ENCODE measurements at regions of chrX and their contacts with region 1.

Region 1: DNA sequence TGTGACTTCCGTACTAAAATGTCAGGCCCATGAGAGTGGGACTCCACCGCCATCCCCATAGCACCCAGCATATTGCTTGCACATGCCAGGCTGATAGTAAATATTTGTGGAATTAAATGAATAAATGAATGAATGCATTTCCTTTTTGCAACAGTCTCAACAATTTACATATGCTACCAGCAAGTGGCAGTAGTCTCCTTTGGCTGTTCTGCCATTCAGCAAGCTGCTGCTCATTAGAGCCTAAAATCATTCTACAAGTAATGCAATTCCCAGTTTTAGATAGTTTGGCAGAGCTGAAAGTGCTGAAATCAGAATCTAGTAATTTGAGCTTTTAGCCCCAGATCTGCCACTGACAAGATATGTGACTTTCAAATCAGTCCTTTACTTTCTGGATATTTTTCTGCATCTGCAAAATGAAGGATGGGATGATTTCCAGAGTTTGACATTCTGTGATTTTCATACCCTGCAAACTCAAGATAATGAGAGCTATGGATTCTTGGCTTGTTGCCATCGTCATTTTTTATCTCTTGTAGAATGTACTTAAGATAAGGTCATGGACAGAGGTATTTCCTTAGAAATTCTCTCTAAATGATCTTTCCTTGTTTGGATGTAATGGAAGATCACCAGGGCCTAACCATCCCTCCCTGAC is 35.7 kb upstream of the INTS6L start:
- DNase-seq: peak in 7 of 9 donors; percentile 12 to 59 (median 36)
- ATAC-seq: peak; percentile 60
- H3K4me3 ChIP-seq: no peak overlapping the region
- H3K4me3 Mint-ChIP-seq: no peak overlapping the region
- H3K27ac ChIP-seq: no peak overlapping the region
- H3K27ac Mint-ChIP-seq: peak overlapping the region in 1 of 9 donors; percentile 24
- H3K4me1 ChIP-seq: no peaks in the 10 kb centered on the region
- H3K4me1 Mint-ChIP-seq: no peaks in the 10 kb centered on the region
- H3K27me3 ChIP-seq: no peaks in the 10 kb centered on the region
- H3K27me3 Mint-ChIP-seq: no peaks in the 10 kb centered on the region

Region 2: DNA sequence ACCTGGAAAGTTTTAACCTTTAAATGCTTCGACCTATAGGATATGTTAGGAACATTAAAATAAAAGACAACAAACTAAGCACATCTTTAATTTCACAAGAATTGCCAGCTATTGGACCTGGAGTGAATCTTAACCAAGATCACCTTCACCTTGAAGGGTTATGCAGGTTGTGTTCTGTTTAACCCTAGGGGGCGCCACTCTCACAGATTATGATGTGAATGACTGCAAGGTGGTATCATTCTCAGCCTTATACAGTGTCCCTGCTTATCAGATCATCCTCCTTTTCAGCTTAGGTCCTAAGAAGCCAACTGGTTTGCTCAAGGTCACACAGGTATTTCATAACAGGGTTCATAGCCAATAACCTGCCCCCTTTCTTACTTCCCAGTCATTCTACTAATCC is 59.2 kb after region 1 on chrX:
- CTCF ChIA-PET with region 1: interaction called, 3 read pairs
- POLR2A ChIA-PET with region 1: no interaction called
- intact Hi-C with region 1: loop called in 1 of 2 experiments (anchors 2 kb)
- DNase-seq: peak in 7 of 9 donors; percentile 7 to 42 (median 30)
- ATAC-seq: peak; percentile 65
- H3K4me3 ChIP-seq: no peak overlapping the region
- H3K4me3 Mint-ChIP-seq: peak overlapping the region in 4 of 10 donors; percentile 12 to 59 (median 38)
- H3K27ac ChIP-seq: no peak overlapping the region
- H3K27ac Mint-ChIP-seq: peak overlapping the region in 4 of 9 donors; percentile 34 to 91 (median 82)
- H3K4me1 ChIP-seq: peaks cover 7 to 12% of the 10 kb centered on the region in 2 donors
- H3K4me1 Mint-ChIP-seq: peaks cover 21 to 58% (median 47%) of the 10 kb centered on the region in 7 donors
- H3K27me3 ChIP-seq: no peaks in the 10 kb centered on the region
- H3K27me3 Mint-ChIP-seq: no peaks in the 10 kb centered on the region

Region 3: DNA sequence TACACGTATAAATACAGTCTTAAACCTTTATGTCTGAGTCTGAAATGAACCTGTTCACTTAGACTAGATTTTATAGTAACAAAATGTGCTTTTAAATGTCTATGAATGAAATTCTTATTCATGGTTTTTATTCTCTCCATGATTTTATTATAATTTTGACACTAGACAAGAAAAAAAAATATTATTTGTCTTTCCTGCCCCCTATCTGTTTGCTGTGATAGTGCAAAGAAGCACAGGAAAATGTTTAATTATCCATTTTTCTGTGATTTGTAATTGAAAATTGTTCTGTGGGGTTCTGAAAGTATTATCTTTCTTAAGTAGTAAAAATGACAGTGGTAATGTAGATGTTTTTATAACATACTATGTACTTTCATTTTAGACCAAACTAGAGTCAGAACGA is 87.7 kb after region 1 on chrX:
- CTCF ChIA-PET with region 1: interaction called, 5 read pairs
- POLR2A ChIA-PET with region 1: no interaction called
- intact Hi-C with region 1: loop called (anchors 1 kb)
- DNase-seq: peak in 4 of 9 donors; percentile 5 to 12 (median 10)
- ATAC-seq: no peak
- H3K4me3 ChIP-seq: no peak overlapping the region
- H3K4me3 Mint-ChIP-seq: no peak overlapping the region
- H3K27ac ChIP-seq: no peak overlapping the region
- H3K27ac Mint-ChIP-seq: no peak overlapping the region
- H3K4me1 ChIP-seq: no peaks in the 10 kb centered on the region
- H3K4me1 Mint-ChIP-seq: peaks cover 0 to 4% (median 0%) of the 10 kb centered on the region in 7 donors
- H3K27me3 ChIP-seq: no peaks in the 10 kb centered on the region
- H3K27me3 Mint-ChIP-seq: no peaks in the 10 kb centered on the region

Region 4: GRCh38 chrX:135596495-135596894 is 111.7 kb after region 1 on chrX:
- CTCF ChIA-PET with region 1: interaction called, 4 read pairs
- POLR2A ChIA-PET with region 1: interaction called, 7 read pairs
- intact Hi-C with region 1: loop called (anchors 1 kb)
- DNase-seq: peak in 8 of 9 donors; percentile 8 to 44 (median 14)
- ATAC-seq: peak; percentile 68
- H3K4me3 ChIP-seq: no peak overlapping the region
- H3K4me3 Mint-ChIP-seq: no peak overlapping the region
- H3K27ac ChIP-seq: no peak overlapping the region
- H3K27ac Mint-ChIP-seq: no peak overlapping the region
- H3K4me1 ChIP-seq: no peaks in the 10 kb centered on the region
- H3K4me1 Mint-ChIP-seq: peaks cover 0 to 3% (median 0%) of the 10 kb centered on the region in 7 donors
- H3K27me3 ChIP-seq: no peaks in the 10 kb centered on the region
- H3K27me3 Mint-ChIP-seq: peaks cover 0 to 19% (median 5%) of the 10 kb centered on the region in 5 donors

Region 5: DNA sequence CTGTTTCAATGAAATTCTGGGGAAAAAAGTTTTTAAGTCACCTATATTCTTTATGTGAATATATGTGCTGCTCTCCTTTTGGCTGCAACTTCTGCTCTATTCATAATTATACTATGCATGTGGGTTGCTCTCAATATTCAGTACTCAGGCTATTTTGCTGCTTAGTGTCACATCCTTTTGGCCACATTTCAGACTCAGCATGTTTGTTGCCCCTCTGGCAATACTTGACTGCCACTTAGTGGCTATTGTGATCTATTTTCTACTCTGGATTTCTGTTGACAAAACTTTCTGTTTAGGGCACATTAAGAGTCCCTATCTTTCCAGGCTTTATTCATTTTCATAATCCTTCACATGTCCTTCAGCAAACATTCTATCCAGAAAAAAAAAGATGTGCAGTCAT is 212.8 kb after region 1 on chrX:
- CTCF ChIA-PET with region 1: interaction called, 3 read pairs
- POLR2A ChIA-PET with region 1: no interaction called
- intact Hi-C with region 1: loop called (anchors 1 to 10 kb)
- DNase-seq: peak in 1 of 9 donors; percentile 4
- ATAC-seq: no peak
- H3K4me3 ChIP-seq: no peak overlapping the region
- H3K4me3 Mint-ChIP-seq: no peak overlapping the region
- H3K27ac ChIP-seq: no peak overlapping the region
- H3K27ac Mint-ChIP-seq: no peak overlapping the region
- H3K4me1 ChIP-seq: no peaks in the 10 kb centered on the region
- H3K4me1 Mint-ChIP-seq: no peaks in the 10 kb centered on the region
- H3K27me3 ChIP-seq: no peaks in the 10 kb centered on the region
- H3K27me3 Mint-ChIP-seq: peaks cover 0 to 6% (median 6%) of the 10 kb centered on the region in 5 donors

Region 6: GRCh38 chrX:135707880-135708279 is 223.1 kb after region 1 on chrX:
- CTCF ChIA-PET with region 1: no interaction called
- POLR2A ChIA-PET with region 1: no interaction called
- intact Hi-C with region 1: loop called in 1 of 2 experiments (anchors 10 kb)
- DNase-seq: peak in 1 of 9 donors; percentile 1
- ATAC-seq: no peak
- H3K4me3 ChIP-seq: no peak overlapping the region
- H3K4me3 Mint-ChIP-seq: no peak overlapping the region
- H3K27ac ChIP-seq: no peak overlapping the region
- H3K27ac Mint-ChIP-seq: no peak overlapping the region
- H3K4me1 ChIP-seq: no peaks in the 10 kb centered on the region
- H3K4me1 Mint-ChIP-seq: no peaks in the 10 kb centered on the region
- H3K27me3 ChIP-seq: no peaks in the 10 kb centered on the region
- H3K27me3 Mint-ChIP-seq: no peaks in the 10 kb centered on the region

Region 7: DNA sequence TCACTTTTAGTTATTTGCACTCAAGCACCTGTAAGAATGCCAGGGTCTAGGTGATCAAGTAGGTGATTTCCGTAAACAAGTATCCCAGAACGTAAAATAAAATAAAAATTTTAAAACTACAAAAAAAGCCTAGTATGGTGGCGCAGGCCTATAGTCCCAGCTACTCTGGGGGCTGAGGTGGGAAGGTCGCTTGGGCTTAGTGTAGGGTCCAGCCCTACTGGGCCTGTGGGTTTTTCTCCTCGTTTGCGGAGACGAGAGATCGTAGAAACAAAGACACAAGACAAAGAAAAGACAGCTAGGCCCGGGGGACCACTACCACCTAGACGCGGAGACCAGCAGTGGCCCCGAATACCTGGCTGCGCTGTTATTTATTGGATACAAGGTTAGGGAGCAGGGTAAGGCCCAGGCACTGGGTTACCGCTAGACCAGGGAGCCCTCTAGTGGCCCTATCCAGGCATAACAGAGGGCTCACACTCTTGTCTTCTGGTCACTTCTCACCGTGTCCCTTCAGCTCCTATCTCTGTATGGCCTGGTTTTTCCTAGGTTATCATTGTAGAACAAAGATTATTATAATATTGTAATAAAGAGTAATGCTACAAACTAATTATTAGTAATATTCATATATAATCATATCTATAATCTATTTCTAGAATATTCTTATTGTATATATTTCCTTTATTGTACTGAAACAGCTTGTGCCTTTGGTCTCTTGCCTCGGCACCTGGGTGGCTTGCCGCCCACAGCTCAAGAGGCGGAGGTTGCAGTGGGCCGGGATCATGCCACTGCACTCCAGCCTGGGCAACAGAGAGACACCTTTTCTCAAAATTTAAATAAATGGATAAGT is 447.1 kb after region 1 on chrX:
- CTCF ChIA-PET with region 1: interaction called, 5 read pairs
- POLR2A ChIA-PET with region 1: no interaction called
- intact Hi-C with region 1: loop called in 1 of 2 experiments (anchors 1 kb)
- DNase-seq: peak in 8 of 9 donors; percentile 3 to 46 (median 30)
- ATAC-seq: peak; percentile 67
- H3K4me3 ChIP-seq: no peak overlapping the region
- H3K4me3 Mint-ChIP-seq: no peak overlapping the region
- H3K27ac ChIP-seq: no peak overlapping the region
- H3K27ac Mint-ChIP-seq: no peak overlapping the region
- H3K4me1 ChIP-seq: no peaks in the 10 kb centered on the region
- H3K4me1 Mint-ChIP-seq: peaks cover 0 to 2% (median 0%) of the 10 kb centered on the region in 7 donors
- H3K27me3 ChIP-seq: no peaks in the 10 kb centered on the region
- H3K27me3 Mint-ChIP-seq: no peaks in the 10 kb centered on the region

Measured in naive thymus-derived CD4-positive, alpha-beta T cell (primary cell).